BJ (cell line): ENCODE measurements at regions of chr12 and their contacts with region 1.

Region 1: GRCh38 chr12:49636979-49637755 is 13.8 kb downstream of the PRPF40B start:
- DNase-seq: no peak
- H3K4me3 ChIP-seq: no peak overlapping the region
- H3K27me3 ChIP-seq: no peaks in the 10 kb centered on the region
- CTCF ChIP-seq: peak; percentile 83

Region 2: DNA sequence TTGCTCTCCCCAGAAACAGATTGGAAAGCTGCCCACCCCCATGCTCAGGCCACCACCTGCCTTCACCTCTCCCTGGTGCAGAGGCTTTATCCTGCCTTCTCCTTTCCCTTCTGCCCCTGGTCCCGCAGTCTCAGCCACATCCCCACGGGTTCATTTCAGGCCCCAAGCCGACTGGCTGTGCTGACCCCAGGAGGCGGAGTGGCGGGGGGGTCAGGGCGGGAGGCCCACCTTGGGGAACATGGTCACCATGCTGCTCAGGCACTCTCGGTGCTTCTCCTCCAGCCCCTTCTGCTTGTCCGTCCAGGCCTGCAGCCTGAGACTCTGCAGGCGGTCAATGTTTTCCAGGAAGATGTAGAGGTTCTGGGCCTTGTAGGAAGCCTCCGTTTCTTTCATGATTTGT is 38.6 kb before region 1 on chr12:
- CTCF ChIA-PET with region 1: no interaction called
- POLR2A ChIA-PET with region 1: no interaction called
- DNase-seq: no peak
- H3K4me3 ChIP-seq: no peak overlapping the region
- H3K27me3 ChIP-seq: no peaks in the 10 kb centered on the region
- CTCF ChIP-seq: no peak

Region 3: DNA sequence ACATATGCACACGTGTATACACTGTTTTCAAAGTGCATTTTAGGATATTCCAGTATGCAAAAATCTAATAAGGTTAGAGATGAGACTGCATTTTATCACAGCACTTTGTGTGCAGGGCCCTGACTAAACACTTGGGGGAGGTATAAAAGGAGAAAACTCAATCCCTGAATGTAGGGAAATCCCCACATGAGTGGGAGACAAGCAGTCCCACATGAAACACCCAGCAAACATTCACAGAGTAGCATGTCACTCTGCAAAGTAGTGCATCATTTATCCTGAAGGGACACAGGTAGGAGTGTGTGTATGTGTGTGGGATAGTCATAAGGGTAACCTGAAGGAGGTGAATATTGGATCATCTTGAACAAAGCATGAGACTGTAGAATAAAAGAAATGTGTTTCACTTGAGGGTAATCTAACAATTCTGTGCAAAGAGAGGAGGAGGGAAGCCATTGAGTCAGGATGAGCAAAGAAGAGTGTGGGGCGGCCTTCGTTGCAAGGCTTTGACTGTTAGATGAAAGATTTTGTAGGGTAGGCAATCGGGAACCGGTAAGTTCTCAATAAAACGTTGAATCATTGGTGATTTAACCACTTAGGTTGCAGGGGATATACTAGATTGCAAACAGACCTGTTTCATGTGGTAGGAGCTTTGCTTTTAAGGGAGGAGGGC is 10.9 kb before region 1 on chr12:
- CTCF ChIA-PET with region 1: interaction called, 13 read pairs
- POLR2A ChIA-PET with region 1: no interaction called
- DNase-seq: no peak
- H3K4me3 ChIP-seq: no peak overlapping the region
- H3K27me3 ChIP-seq: no peaks in the 10 kb centered on the region
- CTCF ChIP-seq: no peak

Region 4: DNA sequence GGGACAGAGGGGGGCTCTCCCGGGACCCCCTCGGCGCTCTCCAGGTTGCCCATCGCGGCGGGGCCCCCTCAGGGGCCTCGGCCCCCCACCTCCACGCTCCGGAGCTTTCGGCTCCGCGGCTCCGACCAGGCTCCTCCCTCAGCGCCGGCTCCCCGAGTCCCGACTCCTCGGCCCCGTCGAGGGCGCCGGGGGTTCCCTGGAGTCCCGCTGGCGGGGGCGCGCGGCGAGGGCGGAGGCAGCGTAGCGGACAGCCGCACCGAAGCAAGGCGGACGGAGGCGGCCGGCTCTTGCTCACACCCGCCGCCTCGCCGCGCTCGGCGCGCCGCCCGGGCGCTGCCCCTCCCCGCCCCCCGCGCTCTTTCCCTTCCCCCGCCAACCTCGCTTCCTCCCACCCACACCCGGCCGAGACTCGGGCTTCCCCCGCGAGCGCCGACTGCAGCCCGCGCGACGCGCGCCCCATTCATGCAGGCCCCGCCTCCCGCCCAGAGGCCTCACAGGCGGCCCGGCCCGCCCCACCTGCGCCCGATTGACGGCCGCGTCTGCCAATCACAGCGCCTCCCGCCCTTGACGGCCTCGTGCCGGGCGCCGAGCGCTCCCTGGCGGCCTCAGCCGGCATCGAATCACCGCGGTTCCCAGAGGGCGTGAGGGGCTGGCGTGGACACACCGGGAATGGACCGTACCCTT is 70.1 kb after region 1 on chr12 and contains the start of gene FMNL3:
- CTCF ChIA-PET with region 1: interaction called, 413 read pairs
- POLR2A ChIA-PET with region 1: no interaction called
- DNase-seq: peak; percentile 59
- H3K4me3 ChIP-seq: peak within 1 kb of the TSS; percentile 83
- H3K27me3 ChIP-seq: peaks cover 7% of the 10 kb centered on the region
- CTCF ChIP-seq: peak; percentile 91
- polyA plus RNA-seq, gene FMNL3: 10.6 and 13.3 TPM in 2 replicates